Right ventricle myocardium inferior (tissue), 1 donor: ENCODE measurements at regions of chr3 and their contacts with region 1.

Region 1: DNA sequence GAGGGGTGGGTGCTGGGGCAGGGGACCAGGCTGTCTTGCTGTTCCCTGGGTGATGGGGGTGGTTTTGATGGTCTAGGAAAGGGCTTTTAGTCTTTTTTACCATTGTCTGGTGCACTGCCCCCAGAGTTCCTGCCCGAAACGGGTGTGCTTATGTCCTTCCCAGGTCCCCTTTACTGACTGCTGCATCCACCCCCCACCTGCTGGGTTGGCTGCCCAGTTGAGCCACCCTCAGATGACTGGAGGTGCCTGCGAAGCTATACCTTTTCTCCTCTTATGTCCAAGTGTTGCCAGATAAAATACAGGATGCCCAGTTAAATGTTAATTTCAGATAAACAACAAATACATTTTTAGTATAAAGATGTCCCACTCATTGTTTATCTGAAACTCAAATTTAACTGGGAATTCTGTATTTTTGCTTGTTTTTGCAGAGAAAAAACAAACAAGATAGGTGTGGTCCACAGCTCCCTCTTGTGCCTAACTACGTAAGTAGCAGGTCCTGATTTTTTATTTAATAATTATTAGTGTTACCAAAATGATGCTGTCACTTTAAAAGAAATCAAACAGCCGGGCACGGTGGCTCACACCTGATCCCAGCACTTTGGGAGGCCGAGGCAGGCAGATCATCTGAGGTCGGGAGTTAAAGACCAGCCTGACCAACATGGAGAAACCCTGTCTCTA is 6.1 kb upstream of the RPP14 start:
- DNase-seq: no peak
- ATAC-seq: no peak

Region 2: GRCh38 chr3:57840473-57840872 is 459.5 kb before region 1 on chr3:
- intact Hi-C with region 1: no loop called
- DNase-seq: no peak
- ATAC-seq: no peak

Region 3: GRCh38 chr3:58237238-58237940 is 62.6 kb before region 1 on chr3 and contains the start of gene ABHD6:
- intact Hi-C with region 1: loop called (anchors 5 kb)
- DNase-seq: peak; percentile 88
- ATAC-seq: peak; percentile 94
- total RNA-seq, gene ABHD6: 10.5 TPM